Naive thymus-derived CD4-positive, alpha-beta T cell (primary cell): ENCODE measurements at regions of chr6 and their contacts with region 1.

Region 1: GRCh38 chr6:27893059-27893835 is 18.9 kb downstream of the OR2B2 start:
- DNase-seq: peak; percentile 75 to 95 (median 92)
- ATAC-seq: peak; percentile 83
- H3K4me3 ChIP-seq: peak overlapping the region; percentile 72
- H3K4me3 Mint-ChIP-seq: no peak overlapping the region
- H3K27ac ChIP-seq: peak overlapping the region; percentile 82
- H3K27ac Mint-ChIP-seq: peak overlapping the region in 1 of 9 donors; percentile 97
- H3K4me1 ChIP-seq: peaks cover 4 to 20% of the 10 kb centered on the region in 2 donors
- H3K4me1 Mint-ChIP-seq: peaks cover 9 to 55% (median 30%) of the 10 kb centered on the region in 7 donors
- H3K27me3 ChIP-seq: no peaks in the 10 kb centered on the region
- H3K27me3 Mint-ChIP-seq: peaks cover 0 to 8% (median 0%) of the 10 kb centered on the region in 5 donors

Region 2: GRCh38 chr6:26196846-26197648 is 1696.2 kb before region 1 on chr6:
- CTCF ChIA-PET with region 1: interaction called, 3 read pairs
- POLR2A ChIA-PET with region 1: interaction called, 43 read pairs
- intact Hi-C with region 1: loop called (anchors 5 kb)
- DNase-seq: peak; percentile 55 to 95 (median 93)
- ATAC-seq: peak; percentile 73
- H3K4me3 ChIP-seq: peak overlapping the region; percentile 92
- H3K4me3 Mint-ChIP-seq: peak overlapping the region; percentile 85 to 99 (median 96)
- H3K27ac ChIP-seq: peak overlapping the region; percentile 91
- H3K27ac Mint-ChIP-seq: peak overlapping the region; percentile 96 to 100 (median 98)
- H3K4me1 ChIP-seq: peaks cover 10 to 12% of the 10 kb centered on the region in 2 donors
- H3K4me1 Mint-ChIP-seq: peaks cover 23 to 65% (median 42%) of the 10 kb centered on the region in 7 donors
- H3K27me3 ChIP-seq: no peaks in the 10 kb centered on the region
- H3K27me3 Mint-ChIP-seq: peaks cover 0 to 12% (median 0%) of the 10 kb centered on the region in 5 donors

Region 3: GRCh38 chr6:27126815-27127537 is 766.3 kb before region 1 on chr6:
- CTCF ChIA-PET with region 1: interaction called, 4 read pairs
- POLR2A ChIA-PET with region 1: interaction called, 94 read pairs
- intact Hi-C with region 1: loop called in 1 of 2 experiments (anchors 1 kb)
- DNase-seq: peak; percentile 46 to 82 (median 77)
- ATAC-seq: peak; percentile 89
- H3K4me3 ChIP-seq: peak overlapping the region; percentile 33
- H3K4me3 Mint-ChIP-seq: peak overlapping the region; percentile 35 to 90 (median 77)
- H3K27ac ChIP-seq: no peak overlapping the region
- H3K27ac Mint-ChIP-seq: peak overlapping the region; percentile 41 to 93 (median 82)
- H3K4me1 ChIP-seq: peaks cover 4 to 6% of the 10 kb centered on the region in 2 donors
- H3K4me1 Mint-ChIP-seq: peaks cover 6 to 51% (median 15%) of the 10 kb centered on the region in 7 donors
- H3K27me3 ChIP-seq: no peaks in the 10 kb centered on the region
- H3K27me3 Mint-ChIP-seq: no peaks in the 10 kb centered on the region

Region 4: GRCh38 chr6:27188885-27189418 is 704.3 kb before region 1 on chr6:
- CTCF ChIA-PET with region 1: no interaction called
- POLR2A ChIA-PET with region 1: interaction called, 10 read pairs
- intact Hi-C with region 1: loop called (anchors 1 kb)
- DNase-seq: peak in 8 of 9 donors; percentile 44 to 69 (median 65)
- ATAC-seq: peak; percentile 90
- H3K4me3 ChIP-seq: peak overlapping the region; percentile 81
- H3K4me3 Mint-ChIP-seq: peak overlapping the region; percentile 82 to 99 (median 93)
- H3K27ac ChIP-seq: peak overlapping the region; percentile 58
- H3K27ac Mint-ChIP-seq: peak overlapping the region in 8 of 9 donors; percentile 44 to 79 (median 64)
- H3K4me1 ChIP-seq: peaks cover 3% of the 10 kb centered on the region in 2 donors
- H3K4me1 Mint-ChIP-seq: peaks cover 9 to 20% (median 15%) of the 10 kb centered on the region in 7 donors
- H3K27me3 ChIP-seq: no peaks in the 10 kb centered on the region
- H3K27me3 Mint-ChIP-seq: peaks cover 0 to 3% (median 0%) of the 10 kb centered on the region in 5 donors

Region 5: DNA sequence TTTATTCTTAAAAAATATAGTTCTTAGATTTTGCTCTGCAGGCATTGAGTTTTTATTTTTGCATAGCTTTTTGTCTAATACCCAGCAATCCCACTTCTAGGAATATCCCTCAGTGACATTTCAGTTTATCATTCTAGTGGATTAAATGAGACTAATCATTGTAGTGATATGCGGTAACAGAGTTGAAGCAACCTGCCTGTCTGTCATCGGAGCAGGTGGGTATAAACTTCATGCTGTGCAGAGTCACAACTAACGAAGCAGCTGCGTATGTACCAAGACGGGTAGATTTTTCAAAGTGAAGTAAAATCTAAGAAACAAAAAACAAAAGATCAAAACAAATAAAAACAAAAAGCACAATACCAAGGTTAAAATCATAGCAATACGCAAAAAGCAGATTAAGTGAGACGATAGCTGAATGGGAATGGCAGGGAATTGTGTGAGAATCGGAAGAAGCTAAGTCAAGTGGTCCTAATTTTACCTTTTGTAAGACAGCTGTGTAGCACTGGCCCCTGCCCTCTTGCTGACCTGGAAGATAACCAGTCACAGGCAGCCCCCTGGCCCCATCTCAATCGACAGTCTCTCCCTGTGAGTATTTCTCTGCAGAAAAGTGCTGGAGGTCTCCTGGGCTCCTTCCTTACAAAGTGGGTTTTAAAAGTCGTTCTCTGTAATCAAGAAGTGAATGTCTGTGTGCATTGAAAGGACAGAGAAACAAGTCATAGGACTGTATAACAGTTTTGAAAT is 150.2 kb before region 1 on chr6:
- CTCF ChIA-PET with region 1: no interaction called
- POLR2A ChIA-PET with region 1: no interaction called
- intact Hi-C with region 1: no loop called
- DNase-seq: no peak
- ATAC-seq: no peak
- H3K4me3 ChIP-seq: no peak overlapping the region
- H3K4me3 Mint-ChIP-seq: no peak overlapping the region
- H3K27ac ChIP-seq: no peak overlapping the region
- H3K27ac Mint-ChIP-seq: no peak overlapping the region
- H3K4me1 ChIP-seq: no peaks in the 10 kb centered on the region
- H3K4me1 Mint-ChIP-seq: peaks cover 2 to 23% (median 7%) of the 10 kb centered on the region in 7 donors
- H3K27me3 ChIP-seq: peaks cover 0 to 7% of the 10 kb centered on the region in 2 donors
- H3K27me3 Mint-ChIP-seq: peaks cover 33 to 53% (median 34%) of the 10 kb centered on the region in 5 donors

Region 6: GRCh38 chr6:27772261-27773001 is 120.8 kb before region 1 on chr6:
- CTCF ChIA-PET with region 1: interaction called, 96 read pairs
- POLR2A ChIA-PET with region 1: interaction called, 26 read pairs
- intact Hi-C with region 1: loop called (anchors 1 kb)
- DNase-seq: peak; percentile 72 to 88 (median 82)
- ATAC-seq: peak; percentile 98
- H3K4me3 ChIP-seq: no peak overlapping the region
- H3K4me3 Mint-ChIP-seq: peak overlapping the region in 6 of 10 donors; percentile 14 to 59 (median 34)
- H3K27ac ChIP-seq: no peak overlapping the region
- H3K27ac Mint-ChIP-seq: peak overlapping the region in 2 of 9 donors; percentile 7 to 8
- H3K4me1 ChIP-seq: peaks cover 3 to 5% of the 10 kb centered on the region in 2 donors
- H3K4me1 Mint-ChIP-seq: peaks cover 6 to 20% (median 7%) of the 10 kb centered on the region in 7 donors
- H3K27me3 ChIP-seq: no peaks in the 10 kb centered on the region
- H3K27me3 Mint-ChIP-seq: peaks cover 1 to 35% (median 10%) of the 10 kb centered on the region in 5 donors

Region 7: DNA sequence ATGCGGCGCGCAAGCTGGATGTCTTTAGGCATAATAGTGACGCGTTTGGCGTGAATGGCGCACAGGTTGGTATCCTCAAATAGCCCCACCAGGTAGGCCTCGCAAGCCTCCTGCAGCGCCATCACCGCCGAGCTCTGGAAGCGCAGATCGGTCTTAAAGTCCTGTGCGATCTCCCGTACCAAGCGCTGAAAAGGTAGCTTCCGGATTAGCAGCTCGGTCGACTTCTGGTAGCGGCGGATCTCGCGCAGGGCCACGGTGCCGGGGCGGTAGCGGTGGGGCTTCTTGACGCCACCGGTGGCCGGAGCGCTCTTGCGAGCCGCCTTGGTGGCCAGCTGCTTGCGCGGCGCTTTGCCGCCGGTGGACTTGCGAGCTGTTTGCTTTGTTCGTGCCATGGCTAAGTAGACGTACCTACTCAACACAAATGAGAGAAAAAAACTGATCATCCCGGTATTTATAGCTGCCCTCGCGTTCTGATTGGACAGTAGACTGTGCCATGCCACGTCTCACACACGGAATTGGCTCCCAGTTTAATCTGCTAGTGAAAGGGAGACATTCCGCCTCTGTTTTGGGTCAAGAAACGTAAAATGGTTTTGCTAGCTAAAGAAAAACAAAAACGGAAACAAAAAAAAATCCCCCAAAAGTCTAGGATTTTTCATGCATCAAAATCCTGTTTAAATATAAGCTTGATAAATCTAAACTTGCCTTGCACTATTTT is 21.2 kb before region 1 on chr6:
- CTCF ChIA-PET with region 1: interaction called, 56 read pairs
- POLR2A ChIA-PET with region 1: interaction called, 717 read pairs
- intact Hi-C with region 1: loop called (anchors 1 kb)
- DNase-seq: peak; percentile 68 to 97 (median 94)
- ATAC-seq: peak; percentile 88
- H3K4me3 ChIP-seq: peak overlapping the region; percentile 69
- H3K4me3 Mint-ChIP-seq: peak overlapping the region; percentile 83 to 99 (median 94)
- H3K27ac ChIP-seq: peak overlapping the region; percentile 84
- H3K27ac Mint-ChIP-seq: peak overlapping the region; percentile 95 to 98 (median 97)
- H3K4me1 ChIP-seq: peaks cover under 1 to 19% of the 10 kb centered on the region in 2 donors
- H3K4me1 Mint-ChIP-seq: peaks cover 15 to 69% (median 42%) of the 10 kb centered on the region in 7 donors
- H3K27me3 ChIP-seq: no peaks in the 10 kb centered on the region
- H3K27me3 Mint-ChIP-seq: peaks cover 0 to 8% (median 0%) of the 10 kb centered on the region in 5 donors